ENCODE measurements at regions of chr14 and their contacts with region 1.

Region 1: GRCh38 chr14:104768437-104769323 is 15.7 kb downstream of the SIVA1 start:
- DNase-seq: peak; percentile 87
- H3K4me3 ChIP-seq: no peak overlapping the region
- H3K27ac ChIP-seq: peak overlapping the region; percentile 36 to 43
- H3K4me1 ChIP-seq: peaks cover 3% of the 10 kb centered on the region
- H3K27me3 ChIP-seq: no peaks in the 10 kb centered on the region
- CTCF ChIP-seq: peak; percentile 92 to 98 (median 96)
- POLR2A ChIP-seq: no peak

Region 2: GRCh38 chr14:103862393-103862782 is 906.3 kb before region 1 on chr14:
- intact Hi-C with region 1: no loop called
- DNase-seq: no peak
- H3K4me3 ChIP-seq: no peak overlapping the region
- H3K27ac ChIP-seq: no peak overlapping the region
- H3K4me1 ChIP-seq: no peaks in the 10 kb centered on the region
- H3K27me3 ChIP-seq: no peaks in the 10 kb centered on the region
- CTCF ChIP-seq: no peak
- POLR2A ChIP-seq: no peak

Region 3: GRCh38 chr14:104393898-104394381 is 374.7 kb before region 1 on chr14:
- intact Hi-C with region 1: no loop called
- DNase-seq: no peak
- H3K4me3 ChIP-seq: no peak overlapping the region
- H3K27ac ChIP-seq: no peak overlapping the region
- H3K4me1 ChIP-seq: no peaks in the 10 kb centered on the region
- H3K27me3 ChIP-seq: peaks cover 6% of the 10 kb centered on the region
- CTCF ChIP-seq: no peak
- POLR2A ChIP-seq: no peak

Region 4: GRCh38 chr14:104633276-104634137 is 135.2 kb before region 1 on chr14:
- intact Hi-C with region 1: no loop called
- DNase-seq: no peak
- H3K4me3 ChIP-seq: no peak overlapping the region
- H3K27ac ChIP-seq: no peak overlapping the region
- H3K4me1 ChIP-seq: no peaks in the 10 kb centered on the region
- H3K27me3 ChIP-seq: no peaks in the 10 kb centered on the region
- CTCF ChIP-seq: no peak
- POLR2A ChIP-seq: no peak

Region 5: GRCh38 chr14:104826189-104826860 is 57.6 kb after region 1 on chr14:
- intact Hi-C with region 1: loop called (anchors 2 kb)
- DNase-seq: peak; percentile 88
- H3K4me3 ChIP-seq: peak overlapping the region; percentile 46 to 49
- H3K27ac ChIP-seq: peak overlapping the region; percentile 42 to 57
- H3K4me1 ChIP-seq: no peaks in the 10 kb centered on the region
- H3K27me3 ChIP-seq: no peaks in the 10 kb centered on the region
- CTCF ChIP-seq: peak; percentile 73 to 92 (median 86)
- POLR2A ChIP-seq: no peak

Measured in prostate gland (tissue), 2 donors.